Tibial artery (tissue), 4 donors: ENCODE measurements at regions of chr10 and their contacts with region 1.

Region 1: GRCh38 chr10:119680050-119680449 is 28.9 kb downstream of the BAG3 start:
- DNase-seq: peak in 1 of 2 donors; percentile 54
- H3K4me3 ChIP-seq: no peak overlapping the region
- H3K27ac ChIP-seq: peak overlapping the region; percentile 55 to 64
- H3K4me1 ChIP-seq: peaks cover 0 to 51% (median 40%) of the 10 kb centered on the region in 4 donors
- H3K27me3 ChIP-seq: no peaks in the 10 kb centered on the region
- CTCF ChIP-seq: no peak

Region 2: DNA sequence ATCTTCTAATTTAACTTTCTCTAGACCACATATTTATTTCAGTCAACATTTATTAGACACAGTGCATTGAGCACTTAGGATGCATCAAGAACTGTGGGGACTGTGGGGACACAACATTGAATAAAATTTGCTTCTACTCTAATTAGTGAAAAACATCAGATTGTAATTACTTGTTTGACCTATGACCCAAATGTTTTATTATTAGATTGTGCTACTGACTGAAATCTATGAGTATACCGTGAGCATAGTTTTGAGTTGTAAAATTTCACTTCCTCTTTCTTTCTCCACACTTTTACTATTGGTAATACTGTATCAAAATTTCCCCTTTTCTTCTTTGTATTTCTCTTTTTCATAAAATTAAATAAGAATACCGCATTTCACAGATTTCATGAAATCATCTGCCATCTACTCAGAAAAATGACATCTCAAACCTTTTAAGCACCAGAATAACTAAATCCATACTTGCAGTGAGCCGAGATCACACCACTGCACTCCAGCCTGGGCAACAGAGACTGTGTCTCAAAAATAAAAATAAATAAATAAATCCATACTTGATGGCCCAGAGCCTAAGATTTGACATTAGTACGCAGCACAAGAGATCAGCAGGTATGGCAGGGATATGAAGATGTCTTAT is 20.4 kb after region 1 on chr10:
- intact Hi-C with region 1: no loop called
- DNase-seq: no peak
- H3K4me3 ChIP-seq: no peak overlapping the region
- H3K27ac ChIP-seq: no peak overlapping the region
- H3K4me1 ChIP-seq: peaks cover 0 to 11% (median 0%) of the 10 kb centered on the region in 4 donors
- H3K27me3 ChIP-seq: no peaks in the 10 kb centered on the region
- CTCF ChIP-seq: no peak

Region 3: DNA sequence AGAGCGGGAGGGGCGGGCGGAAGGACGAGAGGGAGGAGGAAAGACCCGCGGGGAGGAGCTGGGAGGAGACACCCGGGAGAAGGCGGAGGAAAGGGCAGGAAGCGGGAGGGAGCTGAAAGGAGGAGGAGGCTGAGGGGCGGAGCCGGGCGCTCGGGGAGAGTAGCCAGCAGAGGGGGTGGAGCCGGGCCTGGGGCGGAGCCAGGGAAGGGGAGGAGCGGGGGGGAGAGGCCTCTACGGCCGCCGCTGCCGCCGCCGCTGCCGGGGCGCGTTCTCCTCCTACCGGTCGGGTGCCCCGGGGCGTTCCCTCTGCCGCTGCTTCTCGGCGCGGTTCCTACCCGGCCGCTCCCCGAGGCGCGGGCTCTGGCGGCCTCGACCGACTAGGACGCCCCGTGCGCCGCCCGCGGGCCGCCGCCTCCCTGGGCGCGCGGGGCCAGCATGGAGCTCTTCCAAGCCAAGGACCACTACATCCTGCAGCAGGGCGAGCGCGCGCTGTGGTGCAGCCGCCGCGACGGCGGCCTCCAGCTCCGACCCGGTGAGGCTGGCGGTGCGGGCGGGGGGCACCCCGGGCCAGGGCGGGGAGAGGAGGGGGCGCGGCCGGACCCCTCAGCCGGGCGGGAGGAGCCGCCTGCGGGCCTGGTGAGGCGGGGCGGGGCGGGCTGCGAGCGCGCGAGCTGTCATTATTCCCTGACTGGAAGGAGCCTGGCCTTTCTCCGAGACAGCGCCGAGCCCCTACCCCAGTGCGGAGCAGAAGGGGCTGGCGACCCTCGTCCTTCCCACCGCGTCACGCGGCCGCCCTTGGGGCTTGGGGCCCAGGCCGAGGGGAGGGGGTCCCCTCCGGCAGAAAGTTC is 46.0 kb after region 1 on chr10 and contains the start of gene INPP5F:
- intact Hi-C with region 1: loop called (anchors 5 kb)
- DNase-seq: peak; percentile 99 to 100
- H3K4me3 ChIP-seq: peak within 1 kb of the TSS; percentile 77 to 88
- H3K27ac ChIP-seq: peak within 1 kb of the TSS; percentile 87 to 88
- H3K4me1 ChIP-seq: peaks cover 0 to 37% (median 17%) of the 10 kb centered on the region in 4 donors
- H3K27me3 ChIP-seq: no peaks in the 10 kb centered on the region
- CTCF ChIP-seq: peak; percentile 28 to 36